ENCODE measurements at regions of chr1 and their contacts with region 1.

Region 1: DNA sequence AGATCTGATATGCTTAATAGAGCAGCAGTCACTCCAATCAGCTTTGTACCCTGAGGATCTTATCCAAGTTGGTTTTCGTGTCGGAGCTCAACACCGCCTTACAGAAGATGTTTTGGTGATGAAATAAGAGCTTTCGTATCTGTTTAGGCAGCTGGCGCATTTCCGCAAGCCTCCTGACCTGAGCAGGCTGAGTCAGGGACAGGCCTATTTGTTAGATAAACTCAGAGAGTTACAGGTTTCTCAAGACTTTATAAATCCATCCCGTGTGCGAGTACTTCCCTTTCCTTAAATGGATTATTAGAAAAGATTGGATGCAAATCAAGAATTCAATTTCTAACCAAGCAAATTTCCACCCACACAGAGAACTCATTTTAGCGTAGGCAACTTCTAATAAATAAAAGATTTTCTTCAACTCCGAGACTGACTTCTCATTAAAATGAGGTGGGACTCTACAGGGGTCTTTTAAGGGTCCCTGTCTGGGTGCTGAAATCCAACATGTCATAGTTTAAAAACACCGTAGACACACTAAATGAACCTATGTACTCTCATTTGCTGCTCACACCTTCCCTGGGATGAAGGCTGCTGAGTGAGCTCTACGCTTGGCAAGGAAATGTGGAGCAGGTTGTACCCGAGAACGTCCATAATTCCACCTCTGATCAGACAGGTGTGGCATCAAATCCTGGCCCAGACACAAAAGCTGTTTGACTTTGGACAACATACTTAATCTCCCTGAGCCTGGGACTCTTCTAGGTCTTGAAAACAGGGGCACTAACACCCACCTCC is 106.9 kb upstream of the F3 start:
- DNase-seq: peak; percentile 79 to 100
- H3K4me3 ChIP-seq: peak overlapping the region; percentile 32; the same call in 1 of the 2 replicates
- H3K27ac ChIP-seq: peak overlapping the region; percentile 97
- H3K4me1 ChIP-seq: peaks cover 84% of the 10 kb centered on the region
- H3K27me3 ChIP-seq: no peaks in the 10 kb centered on the region
- CTCF ChIP-seq: no peak

Region 2: GRCh38 chr1:94527447-94528031 is 120.9 kb before region 1 on chr1:
- CTCF ChIA-PET with region 1: no interaction called
- POLR2A ChIA-PET with region 1: interaction called, 9 read pairs
- intact Hi-C with region 1: loop called (anchors 1 kb)
- DNase-seq: peak; percentile 62 to 99
- H3K4me3 ChIP-seq: no peak overlapping the region
- H3K27ac ChIP-seq: peak overlapping the region; percentile 71
- H3K4me1 ChIP-seq: peaks cover 60% of the 10 kb centered on the region
- H3K27me3 ChIP-seq: no peaks in the 10 kb centered on the region
- CTCF ChIP-seq: 0 out of 2 replicates have a peak, but pooled peaks have one; percentile 40

Region 3: DNA sequence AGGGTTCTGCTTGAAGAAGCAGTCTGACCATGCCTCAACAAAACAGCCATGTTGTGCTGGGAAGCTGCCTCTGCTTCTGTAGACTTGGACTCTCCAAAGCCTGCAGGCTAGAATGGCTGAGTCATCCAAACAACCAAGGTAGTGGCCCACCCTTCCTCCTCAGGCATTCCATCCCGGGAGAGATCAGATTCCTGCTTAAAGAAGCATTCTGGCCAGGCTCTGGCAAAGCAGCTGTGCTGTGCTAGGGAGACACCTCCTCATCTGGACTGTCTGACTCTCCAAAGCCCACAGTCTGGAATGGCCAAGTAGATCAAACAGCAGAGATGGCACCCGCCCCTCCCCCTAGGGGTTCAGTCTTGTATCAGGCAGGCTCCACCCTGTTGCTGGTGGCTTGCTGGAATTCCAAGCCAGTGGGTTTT is 68.5 kb before region 1 on chr1:
- CTCF ChIA-PET with region 1: no interaction called
- POLR2A ChIA-PET with region 1: no interaction called
- intact Hi-C with region 1: loop called (anchors 1 kb)
- DNase-seq: peak; percentile 88 to 98
- H3K4me3 ChIP-seq: no peak overlapping the region
- H3K27ac ChIP-seq: peak overlapping the region; percentile 66
- H3K4me1 ChIP-seq: peaks cover 35% of the 10 kb centered on the region
- H3K27me3 ChIP-seq: no peaks in the 10 kb centered on the region
- CTCF ChIP-seq: no peak

Region 4: DNA sequence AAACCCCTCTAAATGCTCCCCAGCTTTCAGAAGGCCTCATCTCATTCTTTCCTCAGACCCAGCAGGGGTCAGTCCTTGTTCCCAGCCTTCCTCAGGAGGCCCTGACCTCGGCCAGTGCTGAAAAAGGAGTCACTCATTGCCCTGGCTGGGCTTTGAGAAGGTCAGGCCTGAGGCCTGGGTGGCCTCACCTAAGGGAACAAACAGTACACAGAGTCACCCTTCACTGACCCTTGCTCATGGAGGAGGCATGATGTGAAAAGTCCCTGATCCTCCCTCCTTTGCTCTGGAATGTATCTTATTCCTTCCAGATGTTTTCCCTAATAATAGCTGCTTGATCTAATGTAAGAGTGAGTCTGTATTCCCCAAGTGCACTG is 54.0 kb after region 1 on chr1:
- CTCF ChIA-PET with region 1: no interaction called
- POLR2A ChIA-PET with region 1: no interaction called
- intact Hi-C with region 1: no loop called
- DNase-seq: no peak
- H3K4me3 ChIP-seq: no peak overlapping the region
- H3K27ac ChIP-seq: no peak overlapping the region
- H3K4me1 ChIP-seq: peaks cover 16% of the 10 kb centered on the region
- H3K27me3 ChIP-seq: no peaks in the 10 kb centered on the region
- CTCF ChIP-seq: no peak

Region 5: GRCh38 chr1:94727846-94728715 is 79.7 kb after region 1 on chr1:
- CTCF ChIA-PET with region 1: no interaction called
- POLR2A ChIA-PET with region 1: interaction called, 6 read pairs
- intact Hi-C with region 1: loop called (anchors 1 kb)
- DNase-seq: peak; percentile 83 to 100
- H3K4me3 ChIP-seq: peak overlapping the region; percentile 1; the same call in 1 of the 2 replicates
- H3K27ac ChIP-seq: peak overlapping the region; percentile 85
- H3K4me1 ChIP-seq: peaks cover 44% of the 10 kb centered on the region
- H3K27me3 ChIP-seq: no peaks in the 10 kb centered on the region
- CTCF ChIP-seq: no peak

Region 6: GRCh38 chr1:94783342-94784264 is 135.2 kb after region 1 on chr1:
- CTCF ChIA-PET with region 1: no interaction called
- POLR2A ChIA-PET with region 1: interaction called, 4 read pairs
- intact Hi-C with region 1: loop called (anchors 1 kb)
- DNase-seq: peak; percentile 87 to 94
- H3K4me3 ChIP-seq: peak overlapping the region; percentile 10; the same call in 1 of the 2 replicates
- H3K27ac ChIP-seq: peak overlapping the region; percentile 91
- H3K4me1 ChIP-seq: peaks cover 36% of the 10 kb centered on the region
- H3K27me3 ChIP-seq: no peaks in the 10 kb centered on the region
- CTCF ChIP-seq: no peak

Measured in PC-9 (cell line).